ENCODE measurements at regions of chr1 and their contacts with region 1.

Region 1: DNA sequence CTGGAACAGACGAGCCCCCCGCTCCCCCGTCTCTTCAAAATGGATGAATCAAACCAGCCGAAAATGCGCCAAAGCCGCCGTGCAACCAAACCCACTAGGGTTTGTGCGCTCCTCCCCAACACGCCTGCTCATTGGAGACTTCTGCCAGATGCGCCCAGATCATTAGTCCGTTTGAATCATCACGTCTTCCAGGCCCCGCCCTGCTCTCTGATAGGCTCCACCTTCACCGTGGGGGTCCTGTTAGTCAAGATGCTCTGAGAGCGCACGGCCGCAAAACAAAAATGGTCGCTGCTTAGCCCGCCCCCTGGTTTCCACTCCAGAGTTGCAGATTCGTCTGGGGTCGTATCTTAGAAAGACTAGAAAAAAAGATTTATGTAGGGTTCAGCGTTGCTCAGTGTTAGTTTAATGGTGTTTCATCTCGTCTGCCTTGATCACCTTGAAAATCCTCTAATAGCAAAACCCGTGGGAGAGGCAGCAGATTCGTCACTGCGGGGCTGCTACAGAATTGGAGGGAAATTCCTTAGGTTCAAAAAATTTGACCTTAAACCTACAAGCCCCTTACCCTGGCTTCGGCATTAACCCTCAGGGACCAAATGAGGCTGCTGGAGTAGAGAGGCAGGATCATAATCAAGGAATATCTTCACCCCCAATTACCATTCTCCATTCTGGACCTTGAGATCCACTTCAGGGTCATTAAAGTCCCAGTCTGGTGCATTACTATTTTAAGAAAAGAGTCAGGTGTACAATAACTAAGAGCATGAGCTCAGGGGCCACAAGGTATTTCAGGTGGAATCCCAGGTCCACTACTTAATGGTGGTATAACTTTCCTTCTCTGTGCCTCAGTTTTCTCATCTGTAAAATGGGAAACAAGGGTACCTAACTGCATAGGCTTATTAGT is at the start of gene NUCKS1:
- DNase-seq: peak; percentile 86
- ATAC-seq: peak; percentile 80
- H3K4me3 Mint-ChIP-seq: peak within 1 kb of the TSS; percentile 96
- H3K27ac Mint-ChIP-seq: peak within 1 kb of the TSS; percentile 98
- H3K4me1 Mint-ChIP-seq: peaks cover 43% of the 10 kb centered on the region
- H3K27me3 Mint-ChIP-seq: no peaks in the 10 kb centered on the region
- CTCF ChIP-seq: no peak
- total RNA-seq, gene NUCKS1: 113 and 130 TPM in 2 replicates

Region 2: DNA sequence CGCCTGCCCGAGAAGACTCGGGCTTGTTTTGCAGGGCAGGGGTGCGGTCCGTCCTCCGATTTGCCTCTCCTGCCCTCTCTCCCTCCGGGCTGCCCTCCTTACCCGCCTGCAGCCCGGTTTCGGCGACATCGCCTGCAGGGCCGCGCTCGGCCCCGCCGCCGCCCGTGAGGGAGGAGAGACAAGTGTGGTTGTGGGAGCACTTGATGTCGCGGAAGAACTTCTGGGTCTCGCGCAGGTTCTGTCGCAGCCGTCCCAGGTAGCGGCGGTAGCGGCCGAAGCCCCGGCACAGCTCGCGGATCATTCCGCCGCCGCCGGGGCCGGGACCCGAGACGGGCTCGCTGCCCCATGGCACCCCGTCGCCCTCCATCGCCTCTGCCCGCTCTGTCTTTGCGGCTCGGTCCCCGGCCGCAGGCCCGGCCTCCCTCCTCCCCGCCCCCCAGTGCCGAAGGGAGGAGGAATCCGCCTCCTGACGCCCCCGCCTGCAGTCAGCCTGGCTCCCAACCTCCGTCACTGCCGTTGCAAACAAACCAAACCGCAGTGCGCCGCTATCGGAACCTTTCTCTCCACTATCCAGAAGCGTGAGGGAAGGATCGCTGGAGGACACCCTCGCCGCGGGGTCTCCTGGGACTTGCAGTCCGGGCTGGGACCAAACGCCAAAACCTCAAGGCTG is 539.1 kb before region 1 on chr1 and contains the start of gene DSTYK:
- CTCF ChIA-PET with region 1: no interaction called
- POLR2A ChIA-PET with region 1: no interaction called
- intact Hi-C with region 1: loop called (anchors 5 kb)
- DNase-seq: peak; percentile 81
- ATAC-seq: peak; percentile 82
- H3K4me3 Mint-ChIP-seq: peak within 1 kb of the TSS; percentile 95
- H3K27ac Mint-ChIP-seq: peak within 1 kb of the TSS; percentile 97
- H3K4me1 Mint-ChIP-seq: peaks cover 35% of the 10 kb centered on the region
- H3K27me3 Mint-ChIP-seq: no peaks in the 10 kb centered on the region
- CTCF ChIP-seq: no peak
- total RNA-seq, gene DSTYK: 7.3 and 9.6 TPM in 2 replicates

Region 3: DNA sequence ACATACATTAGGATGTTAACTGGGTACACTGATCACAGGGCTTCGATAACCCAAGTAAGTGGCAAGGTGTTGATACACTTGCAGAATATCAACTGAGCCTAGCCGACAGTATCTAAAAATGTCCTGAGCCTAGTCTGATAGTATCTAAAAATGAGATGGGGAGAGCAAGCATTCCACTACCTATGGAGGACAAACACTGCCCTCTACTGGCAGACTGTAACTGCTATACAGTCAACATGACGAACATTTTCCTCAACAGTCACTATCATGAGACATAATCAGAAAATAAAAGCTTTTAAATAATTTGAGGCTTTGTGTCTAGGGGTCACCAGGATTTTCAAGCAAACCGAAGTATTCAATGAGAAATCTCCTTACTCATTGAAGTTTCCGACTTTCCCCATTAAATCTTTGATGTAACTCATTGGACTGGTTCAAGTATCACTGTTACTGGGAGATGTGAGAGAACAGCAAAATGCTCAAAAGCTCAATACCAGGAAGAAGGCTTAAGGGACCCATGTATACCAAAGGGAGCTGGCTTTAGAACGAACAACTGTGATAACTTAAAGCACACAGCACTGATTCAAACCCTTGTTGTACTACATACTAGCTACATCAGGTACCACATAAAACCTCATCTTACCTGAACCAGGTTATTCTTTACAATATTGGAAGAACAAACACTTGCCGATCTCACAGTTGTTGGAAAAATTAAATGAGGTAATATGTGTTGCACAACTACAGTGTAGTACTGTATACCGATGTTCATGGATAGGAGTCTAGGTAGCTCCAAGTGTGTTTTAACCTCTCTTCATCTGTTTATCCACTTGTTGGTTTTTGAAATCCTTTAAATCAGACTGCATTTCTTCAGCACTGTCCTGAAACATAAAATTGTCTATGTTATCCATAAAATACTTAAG is 39.0 kb before region 1 on chr1:
- CTCF ChIA-PET with region 1: interaction called, 5 read pairs
- POLR2A ChIA-PET with region 1: interaction called, 4 read pairs
- intact Hi-C with region 1: loop called (anchors 5 kb)
- DNase-seq: no peak
- ATAC-seq: peak; percentile 91
- H3K4me3 Mint-ChIP-seq: no peak overlapping the region
- H3K27ac Mint-ChIP-seq: peak overlapping the region; percentile 9
- H3K4me1 Mint-ChIP-seq: peaks cover 23% of the 10 kb centered on the region
- H3K27me3 Mint-ChIP-seq: no peaks in the 10 kb centered on the region
- CTCF ChIP-seq: peak; percentile 46

Region 4: GRCh38 chr1:205775015-205775716 is 24.8 kb after region 1 on chr1 and contains the start of gene RAB29:
- CTCF ChIA-PET with region 1: interaction called, 4 read pairs
- POLR2A ChIA-PET with region 1: interaction called, 162 read pairs
- intact Hi-C with region 1: loop called (anchors 1 kb)
- DNase-seq: peak; percentile 79
- ATAC-seq: peak; percentile 76
- H3K4me3 Mint-ChIP-seq: peak within 1 kb of the TSS; percentile 93
- H3K27ac Mint-ChIP-seq: peak within 1 kb of the TSS; percentile 98
- H3K4me1 Mint-ChIP-seq: peaks cover 66% of the 10 kb centered on the region
- H3K27me3 Mint-ChIP-seq: no peaks in the 10 kb centered on the region
- CTCF ChIP-seq: no peak
- total RNA-seq, gene RAB29: 149 and 156 TPM in 2 replicates

Region 5: DNA sequence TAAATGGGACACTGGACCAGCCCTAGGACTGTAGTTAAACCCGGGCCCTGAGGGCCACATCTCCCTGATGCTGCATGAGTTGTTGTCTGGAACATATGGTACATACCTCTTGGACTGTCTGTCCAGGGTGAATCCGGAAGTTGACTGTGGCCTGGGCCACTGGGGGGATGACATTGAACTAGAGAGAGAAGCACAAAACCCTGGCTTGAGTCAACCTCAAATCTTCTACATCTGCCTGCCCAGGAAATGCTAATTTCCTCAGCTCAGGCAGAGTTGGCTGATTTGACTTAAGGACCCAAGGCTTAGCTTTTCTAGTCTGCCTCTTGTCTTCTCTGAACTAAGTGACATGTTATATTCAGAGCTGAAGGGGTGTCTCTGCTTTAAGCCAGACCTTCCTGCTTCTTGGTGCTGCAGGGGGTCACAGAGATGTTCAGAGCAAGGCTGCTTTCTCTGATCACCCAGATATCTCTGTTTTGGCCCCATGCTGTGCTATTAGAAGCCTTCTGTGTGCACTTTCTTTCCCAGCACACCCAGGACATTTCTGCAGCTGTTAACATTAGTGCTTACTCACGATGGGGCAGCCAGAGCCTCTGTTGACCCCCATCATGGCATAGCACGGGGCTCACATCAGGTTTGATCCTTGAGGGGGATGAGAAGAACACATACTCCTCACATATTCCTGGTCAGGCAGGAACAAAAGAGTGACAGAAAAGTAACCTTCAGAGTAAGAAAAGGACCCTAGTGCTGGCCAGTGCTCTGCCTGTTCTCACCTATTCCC is 89.9 kb after region 1 on chr1:
- CTCF ChIA-PET with region 1: no interaction called
- POLR2A ChIA-PET with region 1: no interaction called
- intact Hi-C with region 1: no loop called
- DNase-seq: no peak
- ATAC-seq: no peak
- H3K4me3 Mint-ChIP-seq: no peak overlapping the region
- H3K27ac Mint-ChIP-seq: no peak overlapping the region
- H3K4me1 Mint-ChIP-seq: no peaks in the 10 kb centered on the region
- H3K27me3 Mint-ChIP-seq: no peaks in the 10 kb centered on the region
- CTCF ChIP-seq: no peak

Region 6: GRCh38 chr1:206012086-206012859 is 261.9 kb after region 1 on chr1:
- CTCF ChIA-PET with region 1: no interaction called
- POLR2A ChIA-PET with region 1: no interaction called
- intact Hi-C with region 1: loop called (anchors 1 kb)
- DNase-seq: peak; percentile 79
- ATAC-seq: peak; percentile 99
- H3K4me3 Mint-ChIP-seq: peak overlapping the region; percentile 70
- H3K27ac Mint-ChIP-seq: peak overlapping the region; percentile 91
- H3K4me1 Mint-ChIP-seq: peaks cover 27% of the 10 kb centered on the region
- H3K27me3 Mint-ChIP-seq: no peaks in the 10 kb centered on the region
- CTCF ChIP-seq: no peak